Aorta (tissue), 5 donors: ENCODE measurements at regions of chr9 and their contacts with region 1.

Region 1: GRCh38 chr9:125839317-125839716 is 92.1 kb downstream of the PBX3 start:
- DNase-seq: no peak
- ATAC-seq: no peak
- H3K4me3 ChIP-seq: no peak overlapping the region
- H3K27ac ChIP-seq: no peak overlapping the region
- H3K4me1 ChIP-seq: no peaks in the 10 kb centered on the region
- H3K27me3 ChIP-seq: no peaks in the 10 kb centered on the region

Region 2: GRCh38 chr9:125706661-125707471 is 132.5 kb before region 1 on chr9 and contains the start of gene MAPKAP1:
- intact Hi-C with region 1: loop called in 1 of 2 experiments (anchors 5 kb)
- DNase-seq: peak; percentile 99
- ATAC-seq: peak; percentile 99
- H3K4me3 ChIP-seq: peak within 1 kb of the TSS; percentile 91 to 93
- H3K27ac ChIP-seq: peak within 1 kb of the TSS; percentile 59 to 65
- H3K4me1 ChIP-seq: peaks cover 6 to 9% of the 10 kb centered on the region in 2 donors
- H3K27me3 ChIP-seq: peaks cover 0 to 1% of the 10 kb centered on the region in 2 donors
- total RNA-seq, gene MAPKAP1: 55.6 to 58.4 TPM